Activated T-helper 1 cell treated with anti-CD3 and anti-CD28 coated beads, Interleukin-12 subunit alpha, Interleukin-12 subunit beta, Interleukin-2, Interleukin-4 antibody, amounts not matched to agents 30 ng/mL and 10 ng/mL and 1 ng/mL, durations not matched to agents 14 hours and 24 hours and 36 hours (primary cell): ENCODE measurements at regions of chr6 and their contacts with region 1.

Region 1: DNA sequence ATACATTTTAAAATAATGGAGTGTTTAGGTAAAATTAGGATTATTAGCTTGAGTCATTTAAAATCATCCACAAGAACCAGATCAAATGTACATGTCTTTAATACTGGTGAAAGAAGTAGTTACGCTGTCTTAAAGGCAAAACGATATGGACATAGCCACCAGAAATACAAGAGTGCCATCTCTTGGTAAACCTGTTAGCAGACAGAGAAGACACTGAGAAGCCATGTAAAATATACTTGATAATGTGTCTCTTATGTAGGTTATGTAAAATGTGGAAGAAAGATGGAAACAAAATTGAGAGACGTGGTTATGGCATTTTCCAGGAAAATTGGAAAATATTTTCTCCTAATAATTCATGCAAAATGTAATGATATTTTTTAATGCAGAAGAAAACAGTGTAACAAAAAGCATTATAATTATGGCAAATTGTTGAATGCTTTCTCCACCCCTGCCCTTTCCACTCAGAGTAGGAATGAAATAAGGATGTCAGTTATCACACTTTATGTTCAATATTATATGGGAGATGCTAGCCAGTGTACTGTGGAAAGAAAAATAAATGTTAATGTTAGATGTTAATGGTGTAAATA is 12.2 kb upstream of the SLC17A2 start:
- DNase-seq: no peak
- H3K4me3 Mint-ChIP-seq: no peak overlapping the region
- H3K27ac Mint-ChIP-seq: no peak overlapping the region
- H3K4me1 Mint-ChIP-seq: peaks cover 28% of the 10 kb centered on the region
- H3K27me3 Mint-ChIP-seq: peaks cover 2% of the 10 kb centered on the region

Region 2: GRCh38 chr6:25278914-25279747 is 663.5 kb before region 1 on chr6 and contains the start of gene CARMIL1:
- intact Hi-C with region 1: loop called (anchors 5 kb)
- DNase-seq: peak; percentile 67
- H3K4me3 Mint-ChIP-seq: peak within 1 kb of the TSS; percentile 88
- H3K27ac Mint-ChIP-seq: peak within 1 kb of the TSS; percentile 79
- H3K4me1 Mint-ChIP-seq: peaks cover 30% of the 10 kb centered on the region
- H3K27me3 Mint-ChIP-seq: peaks cover 12% of the 10 kb centered on the region
- total RNA-seq, gene CARMIL1: 1.7 and 1.9 TPM in 2 replicates

Region 3: GRCh38 chr6:25556516-25556915 is 386.1 kb before region 1 on chr6:
- intact Hi-C with region 1: loop called (anchors 1 kb)
- DNase-seq: peak; percentile 52
- H3K4me3 Mint-ChIP-seq: no peak overlapping the region
- H3K27ac Mint-ChIP-seq: no peak overlapping the region
- H3K4me1 Mint-ChIP-seq: no peaks in the 10 kb centered on the region
- H3K27me3 Mint-ChIP-seq: peaks cover 3% of the 10 kb centered on the region

Region 4: GRCh38 chr6:25735261-25735660 is 207.4 kb before region 1 on chr6:
- intact Hi-C with region 1: loop called (anchors 5 kb)
- DNase-seq: no peak
- H3K4me3 Mint-ChIP-seq: no peak overlapping the region
- H3K27ac Mint-ChIP-seq: no peak overlapping the region
- H3K4me1 Mint-ChIP-seq: no peaks in the 10 kb centered on the region
- H3K27me3 Mint-ChIP-seq: peaks cover 43% of the 10 kb centered on the region

Region 5: DNA sequence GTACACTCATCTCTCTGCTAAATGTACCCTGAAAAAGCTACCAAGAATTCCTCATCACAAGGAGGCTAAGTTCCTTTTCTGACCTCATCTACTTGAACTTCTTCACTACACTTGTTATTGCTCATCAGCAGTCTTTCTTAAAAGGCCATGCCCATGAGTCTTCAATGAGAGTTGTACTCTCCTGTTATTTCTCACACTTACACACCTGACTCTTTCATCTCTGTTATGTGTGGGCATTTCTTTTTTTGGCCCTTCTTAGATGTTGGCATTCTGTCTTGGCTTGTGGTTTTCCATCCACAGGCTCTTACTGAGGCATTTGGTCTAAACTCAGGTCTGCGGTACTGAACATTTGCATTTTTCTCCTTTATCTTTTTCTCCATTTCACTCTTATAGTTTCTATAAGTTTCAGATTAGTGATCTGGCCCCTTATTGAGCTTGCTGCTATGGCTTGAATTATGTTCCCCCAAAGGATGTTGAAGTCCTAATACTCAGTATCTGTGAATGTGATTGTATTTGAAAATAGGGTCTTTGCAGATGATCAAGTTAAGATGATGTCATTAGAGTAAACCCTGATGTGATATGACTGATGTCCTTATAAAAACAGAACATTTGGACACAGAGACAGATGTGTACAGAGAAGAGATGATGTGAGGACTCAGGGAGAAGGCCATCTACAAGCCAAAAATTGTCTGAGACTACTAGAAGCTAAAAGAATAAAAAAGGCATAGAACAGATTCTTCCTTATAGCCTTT is 100.0 kb before region 1 on chr6:
- intact Hi-C with region 1: loop called (anchors 1 kb)
- DNase-seq: no peak
- H3K4me3 Mint-ChIP-seq: no peak overlapping the region
- H3K27ac Mint-ChIP-seq: no peak overlapping the region
- H3K4me1 Mint-ChIP-seq: no peaks in the 10 kb centered on the region
- H3K27me3 Mint-ChIP-seq: peaks cover 2% of the 10 kb centered on the region

Region 6: DNA sequence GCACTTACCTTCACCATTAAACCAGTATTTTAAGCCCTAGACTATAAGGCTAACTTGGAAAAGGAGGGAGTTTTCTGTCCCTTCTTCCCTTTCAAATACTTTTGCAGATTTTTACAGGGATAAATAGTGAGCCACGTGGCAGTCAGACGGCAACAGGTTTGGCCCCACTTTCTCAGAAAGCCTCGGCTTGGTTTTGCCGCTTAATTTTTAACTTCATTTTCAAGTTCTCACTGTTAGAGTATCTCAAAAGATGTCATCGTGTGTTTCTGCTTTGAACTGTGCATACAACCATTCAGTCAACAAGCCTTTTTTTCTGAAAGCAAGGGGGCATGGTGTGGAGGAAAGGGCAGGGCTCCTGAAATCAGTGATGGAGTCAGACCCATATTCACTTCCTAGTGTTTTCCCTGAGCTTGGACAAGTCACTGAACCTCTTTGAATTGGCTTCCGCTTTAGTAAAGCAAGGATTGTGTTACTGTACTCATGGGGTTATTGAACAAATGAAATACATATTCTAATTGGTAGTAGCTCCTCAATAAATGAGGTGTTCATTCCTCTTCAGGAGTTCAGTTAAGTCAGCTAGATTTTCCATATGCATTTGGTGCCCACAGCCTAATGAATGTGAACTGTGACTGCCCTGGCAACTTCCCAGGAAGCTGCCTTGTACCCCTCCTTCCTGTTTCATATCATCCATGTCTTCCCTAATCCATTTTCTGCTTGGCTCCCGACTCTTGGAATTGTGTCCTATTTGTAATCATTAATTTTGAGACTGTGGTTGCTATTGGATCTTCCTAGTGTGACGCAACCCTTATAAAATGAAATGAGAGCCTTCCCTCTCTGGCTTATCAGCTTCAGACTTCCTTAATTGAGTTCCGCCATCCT is 11.9 kb before region 1 on chr6 and contains the start of gene SLC17A2:
- intact Hi-C with region 1: loop called (anchors 2 kb)
- DNase-seq: no peak
- H3K4me3 Mint-ChIP-seq: no peak within 1 kb of the TSS
- H3K27ac Mint-ChIP-seq: no peak within 1 kb of the TSS
- H3K4me1 Mint-ChIP-seq: peaks cover 11% of the 10 kb centered on the region
- H3K27me3 Mint-ChIP-seq: no peaks in the 10 kb centered on the region
- total RNA-seq, gene SLC17A2: 0.10 TPM in 2 replicates

Region 7: DNA sequence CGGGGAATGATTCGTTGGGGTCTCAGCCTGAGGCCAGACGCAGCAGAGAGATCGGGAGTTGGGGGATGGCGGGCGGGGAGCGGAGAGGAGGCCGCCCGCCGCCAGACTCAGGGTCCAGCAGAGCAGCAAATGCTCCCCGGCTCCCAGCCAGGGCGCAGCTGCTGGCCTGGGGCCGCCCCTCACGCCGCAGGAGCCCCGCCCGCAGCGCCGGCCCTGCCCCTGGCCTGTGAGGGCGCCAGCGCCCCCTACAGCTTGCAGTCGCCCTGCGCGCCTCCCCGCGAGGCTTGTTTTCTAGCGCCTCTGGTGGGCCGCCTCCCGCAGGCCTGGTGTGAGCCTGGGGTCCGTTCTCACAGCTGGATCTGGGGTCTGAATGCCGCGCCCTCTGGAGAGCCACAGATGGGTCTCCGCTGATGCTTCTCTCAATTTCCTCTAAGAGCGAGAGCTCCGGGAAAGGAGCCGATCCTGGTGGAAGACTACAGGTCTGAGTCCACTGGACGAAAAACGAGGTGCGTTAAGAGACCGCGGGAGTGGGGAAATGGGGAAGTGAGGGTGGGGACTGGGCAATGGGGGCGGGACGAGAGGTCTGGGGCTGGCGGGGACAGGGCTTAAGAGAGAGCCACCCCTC is 49.9 kb after region 1 on chr6:
- intact Hi-C with region 1: loop called (anchors 1 kb)
- DNase-seq: peak; percentile 91
- H3K4me3 Mint-ChIP-seq: peak overlapping the region; percentile 95
- H3K27ac Mint-ChIP-seq: peak overlapping the region; percentile 94
- H3K4me1 Mint-ChIP-seq: peaks cover 37% of the 10 kb centered on the region
- H3K27me3 Mint-ChIP-seq: no peaks in the 10 kb centered on the region